ENCODE measurements at regions of chr21 and their contacts with region 1.

Region 1: GRCh38 chr21:36927719-36928117 is 38.8 kb downstream of the HLCS start:
- DNase-seq: peak; percentile 67
- ATAC-seq: no peak
- H3K4me3 ChIP-seq: no peak overlapping the region
- H3K4me3 Mint-ChIP-seq: no peak overlapping the region
- H3K27ac ChIP-seq: no peak overlapping the region
- H3K27ac Mint-ChIP-seq: no peak overlapping the region
- H3K4me1 ChIP-seq: no peaks in the 10 kb centered on the region
- H3K4me1 Mint-ChIP-seq: no peaks in the 10 kb centered on the region
- H3K27me3 ChIP-seq: no peaks in the 10 kb centered on the region
- H3K27me3 Mint-ChIP-seq: no peaks in the 10 kb centered on the region
- CTCF ChIP-seq: peak; percentile 93

Region 2: GRCh38 chr21:36125512-36126222 is 802.1 kb before region 1 on chr21:
- CTCF ChIA-PET with region 1: no interaction called
- POLR2A ChIA-PET with region 1: no interaction called
- intact Hi-C with region 1: loop called (anchors 5 kb)
- DNase-seq: peak; percentile 69
- ATAC-seq: peak; percentile 52
- H3K4me3 ChIP-seq: no peak overlapping the region
- H3K4me3 Mint-ChIP-seq: no peak overlapping the region
- H3K27ac ChIP-seq: no peak overlapping the region
- H3K27ac Mint-ChIP-seq: no peak overlapping the region
- H3K4me1 ChIP-seq: peaks cover 3 to 9% of the 10 kb centered on the region in 2 donors
- H3K4me1 Mint-ChIP-seq: peaks cover 12% of the 10 kb centered on the region
- H3K27me3 ChIP-seq: no peaks in the 10 kb centered on the region
- H3K27me3 Mint-ChIP-seq: no peaks in the 10 kb centered on the region
- CTCF ChIP-seq: peak; percentile 95

Region 3: GRCh38 chr21:36630485-36631206 is 297.1 kb before region 1 on chr21:
- CTCF ChIA-PET with region 1: interaction called, 15 read pairs
- POLR2A ChIA-PET with region 1: no interaction called
- intact Hi-C with region 1: no loop called
- DNase-seq: peak; percentile 54
- ATAC-seq: no peak
- H3K4me3 ChIP-seq: no peak overlapping the region
- H3K4me3 Mint-ChIP-seq: no peak overlapping the region
- H3K27ac ChIP-seq: no peak overlapping the region
- H3K27ac Mint-ChIP-seq: no peak overlapping the region
- H3K4me1 ChIP-seq: no peaks in the 10 kb centered on the region
- H3K4me1 Mint-ChIP-seq: no peaks in the 10 kb centered on the region
- H3K27me3 ChIP-seq: peaks cover 0 to 8% (median 0%) of the 10 kb centered on the region in 4 experiments
- H3K27me3 Mint-ChIP-seq: peaks cover 8% of the 10 kb centered on the region
- CTCF ChIP-seq: peak; percentile 73

Region 4: GRCh38 chr21:37751268-37751975 is 823.7 kb after region 1 on chr21:
- CTCF ChIA-PET with region 1: no interaction called
- POLR2A ChIA-PET with region 1: no interaction called
- intact Hi-C with region 1: no loop called
- DNase-seq: no peak
- ATAC-seq: no peak
- H3K4me3 ChIP-seq: no peak overlapping the region
- H3K4me3 Mint-ChIP-seq: no peak overlapping the region
- H3K27ac ChIP-seq: no peak overlapping the region
- H3K27ac Mint-ChIP-seq: no peak overlapping the region
- H3K4me1 ChIP-seq: no peaks in the 10 kb centered on the region
- H3K4me1 Mint-ChIP-seq: no peaks in the 10 kb centered on the region
- H3K27me3 ChIP-seq: no peaks in the 10 kb centered on the region
- H3K27me3 Mint-ChIP-seq: no peaks in the 10 kb centered on the region
- CTCF ChIP-seq: no peak